Heart right ventricle (tissue), 16 donors: ENCODE measurements at regions of chr10 and their contacts with region 1.

Region 1: DNA sequence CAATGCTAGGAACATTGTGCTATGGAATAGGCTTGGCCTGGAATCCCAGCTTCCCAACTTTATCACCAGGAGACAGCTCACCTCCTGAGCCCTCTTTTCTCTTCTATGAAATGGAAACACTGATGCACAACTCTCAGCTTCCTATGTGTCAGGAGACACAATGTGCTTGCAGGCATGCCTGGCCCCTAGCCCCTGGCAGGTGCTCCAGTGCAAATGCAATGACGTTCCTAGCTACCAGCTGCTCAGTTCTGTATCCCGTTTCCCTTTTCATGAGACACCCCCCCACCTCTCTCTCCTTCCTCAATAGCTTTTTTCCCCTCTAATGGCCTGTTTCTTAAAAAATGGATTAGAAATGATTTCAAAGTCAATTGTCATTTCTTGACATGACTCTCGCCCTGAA is 30.7 kb downstream of the HABP2 start:
- DNase-seq: no peak
- ATAC-seq: peak in 2 of 8 donors; percentile 16 to 41
- H3K4me3 ChIP-seq: no peak overlapping the region
- H3K27ac ChIP-seq: no peak overlapping the region
- H3K4me1 ChIP-seq: no peaks in the 10 kb centered on the region
- H3K27me3 ChIP-seq: no peaks in the 10 kb centered on the region
- CTCF ChIP-seq: no peak

Region 2: DNA sequence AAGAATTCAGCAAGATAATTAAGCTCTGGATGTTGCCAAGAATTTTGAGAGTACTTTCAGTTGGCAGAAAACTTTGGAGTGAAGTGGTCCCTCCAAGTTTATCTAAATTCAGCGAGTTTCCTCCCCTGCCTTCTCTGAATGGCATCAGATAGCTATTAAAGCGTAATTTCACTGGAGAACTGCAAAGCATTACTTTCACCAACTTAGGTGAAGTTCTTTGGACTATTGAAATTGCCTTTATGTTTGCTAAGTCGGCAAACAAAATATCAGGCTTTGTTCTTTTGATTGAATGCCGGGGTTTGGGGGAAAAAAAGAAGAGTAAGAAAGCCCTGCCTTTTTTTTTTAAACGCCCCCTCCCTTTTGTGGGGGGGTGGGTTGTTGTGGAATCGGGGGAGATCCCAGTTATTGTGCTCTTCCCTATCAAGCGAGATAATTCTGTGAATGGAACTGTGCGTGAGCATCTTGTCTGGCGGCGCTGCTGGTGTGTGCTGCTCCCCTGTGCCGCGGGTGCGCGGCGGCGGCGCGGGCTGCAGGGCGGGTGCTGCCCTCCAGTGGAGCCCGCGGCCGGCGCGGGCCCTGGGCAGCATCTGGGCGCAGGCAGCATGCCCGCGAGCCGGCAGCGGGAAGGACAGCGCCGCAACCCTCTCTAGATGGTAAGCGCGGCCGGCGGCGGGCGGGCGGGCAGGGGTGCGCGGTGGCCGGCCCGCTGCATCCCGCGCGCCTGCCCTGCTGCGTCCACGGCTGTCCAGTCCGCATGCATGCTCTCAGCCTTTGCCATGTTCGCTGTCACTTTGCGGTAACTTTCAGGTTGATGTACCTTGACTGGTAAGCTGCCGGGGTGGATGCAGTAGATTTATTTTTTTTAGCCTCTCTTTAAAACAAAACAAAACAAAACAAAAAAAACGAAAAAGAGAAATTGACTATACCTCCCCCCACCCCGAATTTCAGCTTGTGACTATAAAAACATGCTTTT is 457.1 kb before region 1 on chr10:
- intact Hi-C with region 1: no loop called
- DNase-seq: peak; percentile 55 to 75
- ATAC-seq: peak; percentile 87 to 99 (median 94)
- H3K4me3 ChIP-seq: peak overlapping the region in 8 of 10 donors; percentile 19 to 47 (median 39)
- H3K27ac ChIP-seq: peak overlapping the region in 7 of 10 donors; percentile 5 to 69 (median 28)
- H3K4me1 ChIP-seq: peaks cover 0 to 27% (median 4%) of the 10 kb centered on the region in 9 donors
- H3K27me3 ChIP-seq: peaks cover 0 to 18% (median 0%) of the 10 kb centered on the region in 7 donors
- CTCF ChIP-seq: peak; percentile 54 to 87 (median 75)

Region 3: DNA sequence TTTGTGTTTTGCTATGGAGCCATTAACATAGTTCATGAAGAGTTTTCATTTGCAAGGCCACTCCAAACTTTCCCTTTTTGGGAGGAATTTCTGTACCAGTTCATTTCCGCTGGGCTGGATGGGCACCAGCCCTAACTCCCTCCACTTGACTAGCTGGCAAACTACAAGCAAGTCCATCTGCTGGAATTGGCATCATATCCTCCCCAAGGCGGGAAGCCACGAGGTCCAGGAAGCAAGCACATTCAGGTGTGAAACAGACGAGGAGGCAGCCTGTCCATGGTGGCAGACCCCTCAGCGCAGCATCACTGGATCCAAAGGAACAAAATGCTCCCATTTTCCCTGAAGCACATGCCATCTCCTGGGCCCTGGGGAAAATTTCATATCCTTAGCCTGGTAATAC is 948.7 kb after region 1 on chr10:
- intact Hi-C with region 1: loop called in 1 of 10 experiments (anchors 5 kb)
- DNase-seq: no peak
- ATAC-seq: peak in 1 of 8 donors; percentile 35
- H3K4me3 ChIP-seq: no peak overlapping the region
- H3K27ac ChIP-seq: peak overlapping the region in 1 of 10 donors; percentile 38
- H3K4me1 ChIP-seq: peaks cover 0 to 19% (median 7%) of the 10 kb centered on the region in 9 donors
- H3K27me3 ChIP-seq: no peaks in the 10 kb centered on the region
- CTCF ChIP-seq: no peak